Endothelial cell of umbilical vein (primary cell): ENCODE measurements at regions of chr3 and their contacts with region 1.

Region 1: DNA sequence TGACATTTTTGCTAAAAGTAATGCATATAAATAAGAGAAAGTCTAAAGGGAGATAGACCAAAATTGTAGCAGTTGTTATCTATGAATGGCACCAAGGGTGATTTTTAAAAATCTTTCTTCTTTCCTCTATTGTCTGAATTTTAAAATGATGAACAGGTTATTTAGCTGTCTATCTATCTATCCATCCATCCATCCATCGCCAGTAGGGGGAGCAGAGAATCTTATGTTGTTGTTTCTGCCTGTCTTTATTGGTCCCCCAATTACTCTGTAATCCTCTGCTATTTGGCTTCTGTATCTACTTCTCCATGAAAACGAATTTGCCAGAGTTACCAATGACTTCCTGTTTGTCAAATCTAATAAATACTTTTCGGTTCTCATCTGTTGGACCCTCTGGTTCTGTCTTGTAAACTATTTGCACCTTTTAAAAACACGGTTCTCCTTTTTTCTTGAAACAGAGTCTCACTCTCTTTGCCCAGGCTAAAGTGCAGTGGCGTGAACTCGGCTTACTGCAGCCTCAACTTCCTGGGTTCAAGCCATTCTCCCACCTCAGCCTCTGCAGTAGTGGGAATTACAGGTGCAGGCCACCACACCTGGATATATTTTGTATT is 86.0 kb downstream of the ECT2 start:
- DNase-seq: peak; percentile 65
- H3K4me3 ChIP-seq: no peak overlapping the region
- H3K27ac ChIP-seq: no peak overlapping the region
- H3K4me1 ChIP-seq: no peaks in the 10 kb centered on the region
- H3K27me3 ChIP-seq: no peaks in the 10 kb centered on the region
- CTCF ChIP-seq: peak; percentile 44 to 62
- POLR2A ChIP-seq: no peak

Region 2: DNA sequence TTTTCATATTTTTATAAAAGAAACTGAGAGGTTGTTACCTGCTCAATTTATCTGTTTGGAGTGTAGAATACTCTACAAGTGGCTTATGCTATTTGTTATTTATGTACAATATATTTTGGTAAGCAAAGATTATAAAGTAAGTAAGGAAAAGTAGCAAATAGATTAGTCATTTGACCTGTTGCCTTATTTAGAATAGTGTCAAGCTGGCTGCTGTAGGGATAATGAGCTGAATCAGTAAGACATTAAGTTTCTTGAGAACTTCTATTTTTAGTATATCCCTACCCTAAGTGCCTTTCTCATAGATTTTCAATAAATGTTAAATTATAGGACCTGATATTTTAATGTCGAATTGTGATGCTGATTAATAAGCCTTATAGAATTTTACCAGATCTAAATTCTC is 48.7 kb before region 1 on chr3:
- CTCF ChIA-PET with region 1: no interaction called
- POLR2A ChIA-PET with region 1: no interaction called
- dilution Hi-C with region 1: no loop called
- intact Hi-C with region 1: no loop called
- DNase-seq: peak; percentile 38
- H3K4me3 ChIP-seq: no peak overlapping the region
- H3K27ac ChIP-seq: no peak overlapping the region
- H3K4me1 ChIP-seq: peaks cover 7% of the 10 kb centered on the region
- H3K27me3 ChIP-seq: no peaks in the 10 kb centered on the region
- CTCF ChIP-seq: no peak
- POLR2A ChIP-seq: no peak

Region 3: DNA sequence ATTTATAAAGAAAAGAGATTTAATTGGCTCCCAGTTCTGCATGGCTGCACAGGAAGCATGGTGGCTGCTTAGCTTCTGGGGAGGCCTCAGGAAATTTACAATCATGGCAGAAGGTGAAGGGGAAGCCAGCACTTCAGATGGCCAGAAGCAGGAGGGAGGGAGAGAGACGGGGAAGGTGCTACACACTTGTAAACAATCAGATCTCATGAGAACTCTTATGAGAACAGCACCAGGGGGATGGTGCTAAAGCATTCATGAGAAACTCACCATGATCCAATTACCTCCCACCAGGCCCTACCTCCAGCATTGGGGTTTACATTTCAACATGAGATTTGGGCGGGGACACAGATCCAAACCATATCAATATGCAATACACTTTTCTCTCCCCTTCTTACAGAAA is 12.3 kb before region 1 on chr3:
- CTCF ChIA-PET with region 1: interaction called, 15 read pairs
- POLR2A ChIA-PET with region 1: no interaction called
- dilution Hi-C with region 1: no loop called
- intact Hi-C with region 1: no loop called
- DNase-seq: no peak
- H3K4me3 ChIP-seq: no peak overlapping the region
- H3K27ac ChIP-seq: no peak overlapping the region
- H3K4me1 ChIP-seq: no peaks in the 10 kb centered on the region
- H3K27me3 ChIP-seq: no peaks in the 10 kb centered on the region
- CTCF ChIP-seq: no peak
- POLR2A ChIP-seq: no peak

Region 4: DNA sequence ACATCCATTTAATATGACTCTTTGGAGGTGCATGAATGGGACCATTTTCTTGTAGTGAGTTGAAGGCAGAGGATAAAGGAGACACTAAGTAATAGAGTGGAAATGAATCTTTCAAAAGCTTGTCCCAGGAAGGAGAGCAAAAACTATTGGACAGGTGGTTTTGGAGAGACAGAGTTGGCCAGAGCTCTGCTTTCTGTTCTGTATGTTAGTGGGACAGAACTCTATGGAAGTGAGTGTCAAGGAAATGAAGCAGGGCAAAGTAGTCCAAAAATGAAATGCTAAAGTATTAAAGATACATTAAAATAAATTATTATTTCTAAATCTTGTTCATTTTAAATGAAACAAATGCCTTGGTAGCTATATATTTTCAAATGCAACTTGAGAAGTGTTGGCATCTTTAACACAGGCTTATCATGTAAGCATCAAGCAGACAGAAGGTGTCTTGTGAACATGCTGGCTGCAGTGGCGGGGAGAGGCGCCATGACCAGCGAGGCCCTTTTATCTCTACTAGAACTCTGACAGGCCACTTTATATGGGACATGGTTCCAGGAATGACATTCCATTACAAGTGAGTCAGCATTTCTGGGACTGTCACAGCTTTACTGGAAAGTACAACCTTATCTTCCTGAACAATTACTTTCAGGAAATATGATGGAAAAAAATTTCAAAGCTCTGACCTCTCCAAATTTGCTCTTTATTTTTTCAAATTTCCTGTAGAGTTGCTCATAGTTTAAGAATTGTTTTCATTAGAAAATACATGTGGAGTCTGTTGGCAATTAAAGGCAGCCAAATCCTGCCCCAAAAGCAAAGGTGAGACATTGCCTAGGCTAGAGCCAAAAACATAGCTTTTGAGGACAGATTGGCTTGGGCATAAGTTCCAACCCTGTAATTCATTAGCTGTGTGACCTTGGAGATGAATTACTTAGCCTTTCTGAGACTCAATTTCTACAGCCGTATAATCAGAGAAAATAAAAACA is 20.6 kb after region 1 on chr3:
- CTCF ChIA-PET with region 1: interaction called, 11 read pairs
- POLR2A ChIA-PET with region 1: no interaction called
- dilution Hi-C with region 1: no loop called
- intact Hi-C with region 1: no loop called
- DNase-seq: peak; percentile 88
- H3K4me3 ChIP-seq: no peak overlapping the region
- H3K27ac ChIP-seq: peak overlapping the region; percentile 46
- H3K4me1 ChIP-seq: peaks cover 45% of the 10 kb centered on the region
- H3K27me3 ChIP-seq: no peaks in the 10 kb centered on the region
- CTCF ChIP-seq: no peak
- POLR2A ChIP-seq: no peak

Region 5: GRCh38 chr3:172939651-172940293 is 103.3 kb after region 1 on chr3:
- CTCF ChIA-PET with region 1: interaction called, 10 read pairs
- POLR2A ChIA-PET with region 1: no interaction called
- dilution Hi-C with region 1: no loop called
- intact Hi-C with region 1: no loop called
- DNase-seq: peak; percentile 77
- H3K4me3 ChIP-seq: no peak overlapping the region
- H3K27ac ChIP-seq: peak overlapping the region; percentile 84
- H3K4me1 ChIP-seq: peaks cover 21% of the 10 kb centered on the region
- H3K27me3 ChIP-seq: no peaks in the 10 kb centered on the region
- CTCF ChIP-seq: no peak
- POLR2A ChIP-seq: no peak

Region 6: DNA sequence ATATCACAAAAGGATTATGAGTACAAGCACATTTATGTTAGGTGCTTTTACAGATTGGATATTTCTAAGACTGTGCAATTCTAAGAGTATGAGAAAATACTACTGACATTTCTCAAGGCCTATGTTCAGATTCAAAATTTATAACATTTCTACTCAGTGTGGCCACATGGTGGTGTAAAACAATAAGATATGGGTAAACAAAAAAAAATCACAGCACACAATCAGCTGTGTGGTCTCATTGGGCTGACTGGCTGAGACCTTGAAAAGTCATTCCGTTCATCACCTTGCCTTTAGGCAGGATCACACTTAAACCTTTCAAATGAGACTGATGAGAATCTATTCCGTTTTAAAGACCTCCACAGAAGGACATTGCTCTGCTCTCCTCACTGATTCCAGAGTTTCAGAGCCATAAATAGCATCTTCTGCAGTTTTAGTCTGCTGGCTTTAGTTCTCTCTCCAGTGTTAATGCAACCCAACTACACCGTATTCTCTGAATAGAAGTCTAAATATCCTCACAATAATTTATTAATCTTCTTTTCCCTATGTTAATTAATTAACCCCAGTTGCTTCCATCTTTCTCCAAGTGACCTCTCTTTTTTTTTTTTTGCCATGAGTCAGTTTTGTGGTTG is 146.4 kb after region 1 on chr3:
- CTCF ChIA-PET with region 1: interaction called, 6 read pairs
- POLR2A ChIA-PET with region 1: no interaction called
- dilution Hi-C with region 1: no loop called
- intact Hi-C with region 1: loop called (anchors 2 kb)
- DNase-seq: peak; percentile 39
- H3K4me3 ChIP-seq: no peak overlapping the region
- H3K27ac ChIP-seq: no peak overlapping the region
- H3K4me1 ChIP-seq: no peaks in the 10 kb centered on the region
- H3K27me3 ChIP-seq: no peaks in the 10 kb centered on the region
- CTCF ChIP-seq: peak in 1 of 2 donors; percentile 6
- POLR2A ChIP-seq: no peak

Region 7: DNA sequence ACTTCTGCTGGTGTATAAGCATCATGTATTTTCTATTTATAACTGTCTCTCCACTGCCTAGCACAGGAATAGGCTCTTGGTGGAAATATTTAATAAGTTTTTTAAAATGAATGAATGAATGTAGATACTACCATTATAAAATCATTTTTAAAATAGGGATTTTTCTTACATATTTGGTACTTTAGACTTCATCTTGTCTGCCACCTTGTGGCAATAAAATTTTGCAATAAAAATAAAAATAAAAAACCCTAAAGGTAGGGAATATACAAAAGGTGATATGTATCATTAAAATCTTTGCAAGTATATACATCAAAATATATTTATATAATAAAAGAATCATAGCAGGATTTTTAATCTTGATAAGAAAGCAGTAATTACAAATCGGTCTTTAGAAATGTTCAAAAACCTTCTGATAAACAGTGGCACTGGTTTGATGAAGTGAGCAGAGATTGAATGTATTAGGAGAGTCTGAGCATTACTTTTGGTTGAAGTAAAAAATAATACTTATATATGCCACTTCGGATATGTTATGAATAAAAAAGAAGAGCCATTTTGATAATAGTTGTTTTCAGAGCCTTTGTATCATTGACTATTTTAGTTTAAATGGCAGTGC is 209.4 kb after region 1 on chr3:
- CTCF ChIA-PET with region 1: interaction called, 40 read pairs
- POLR2A ChIA-PET with region 1: no interaction called
- dilution Hi-C with region 1: no loop called
- intact Hi-C with region 1: loop called (anchors 1 kb)
- DNase-seq: peak; percentile 35
- H3K4me3 ChIP-seq: no peak overlapping the region
- H3K27ac ChIP-seq: no peak overlapping the region
- H3K4me1 ChIP-seq: no peaks in the 10 kb centered on the region
- H3K27me3 ChIP-seq: no peaks in the 10 kb centered on the region
- CTCF ChIP-seq: peak in 1 of 2 donors; percentile 4
- POLR2A ChIP-seq: no peak